ENCODE measurements at regions of chr3 and their contacts with region 1.

Region 1: DNA sequence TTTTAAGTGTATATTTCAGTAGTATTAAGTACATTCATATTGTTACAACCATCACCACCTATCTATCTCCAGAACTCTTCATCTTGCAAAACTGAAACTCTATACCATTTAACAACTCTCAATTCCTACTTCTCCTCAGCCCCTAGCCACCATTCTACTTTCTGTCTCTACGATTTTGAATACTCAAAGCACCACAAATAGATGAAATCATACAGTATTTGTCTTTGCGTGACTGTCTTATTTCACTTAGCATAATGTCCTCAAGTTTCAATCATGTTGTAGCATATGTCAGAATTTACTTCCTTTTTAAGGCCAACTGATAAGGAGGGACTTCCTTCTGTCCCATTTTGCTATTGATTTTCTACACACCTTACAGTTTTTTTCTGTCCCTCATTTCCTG is 593.3 kb downstream of the FHIT start:
- DNase-seq: no peak
- H3K4me3 ChIP-seq: no peak overlapping the region
- H3K27ac ChIP-seq: no peak overlapping the region
- H3K4me1 ChIP-seq: no peaks in the 10 kb centered on the region
- H3K27me3 ChIP-seq: no peaks in the 10 kb centered on the region
- CTCF ChIP-seq: no peak
- EP300 ChIP-seq: no peak
- POLR2A ChIP-seq: no peak

Region 2: DNA sequence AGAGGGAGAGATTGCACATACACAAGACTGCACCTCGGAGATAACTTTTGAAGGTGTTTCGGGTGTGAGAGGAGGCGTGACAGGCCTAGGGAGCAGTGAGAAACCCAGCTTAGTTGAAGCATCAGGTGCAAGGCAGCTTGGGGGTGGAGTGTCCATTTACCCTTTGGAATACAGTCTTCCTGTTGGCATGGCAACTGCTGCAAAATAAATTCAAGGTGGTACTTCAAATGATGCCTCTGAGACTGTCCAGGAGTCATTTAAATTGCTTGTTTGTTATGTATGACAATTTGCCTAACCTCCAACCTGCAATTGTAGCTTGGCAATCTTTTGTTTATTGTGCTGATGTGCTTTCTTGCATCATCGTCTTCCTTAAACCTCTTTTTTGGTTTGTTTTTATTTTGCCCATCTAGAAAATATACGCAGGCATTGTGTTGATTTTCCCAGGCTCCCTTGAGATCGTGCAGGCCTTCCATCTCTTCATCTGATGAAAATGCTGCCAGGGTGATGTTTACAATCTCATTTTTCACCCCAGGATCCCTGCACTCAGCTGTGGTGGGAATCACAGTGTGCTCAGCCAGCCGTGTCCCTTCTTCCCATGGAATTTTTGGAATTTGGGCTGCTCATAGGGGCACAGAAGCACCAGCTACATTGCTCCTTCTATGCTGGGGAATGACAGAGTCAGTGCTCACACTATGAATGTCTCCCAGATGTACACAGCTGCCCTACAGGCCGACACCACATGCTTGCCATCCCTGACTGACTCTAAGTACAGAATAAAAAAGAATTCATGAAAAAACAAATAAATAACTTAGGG is 1025.0 kb before region 1 on chr3:
- in situ Hi-C with region 1: no loop called
- intact Hi-C with region 1: loop called (anchors 10 kb)
- DNase-seq: no peak
- H3K4me3 ChIP-seq: no peak overlapping the region
- H3K27ac ChIP-seq: peak overlapping the region in 2 of 4 donors; percentile 17 to 21
- H3K4me1 ChIP-seq: peaks cover 0 to 5% (median 0%) of the 10 kb centered on the region in 4 donors
- H3K27me3 ChIP-seq: no peaks in the 10 kb centered on the region
- CTCF ChIP-seq: no peak
- EP300 ChIP-seq: no peak
- POLR2A ChIP-seq: no peak

Region 3: DNA sequence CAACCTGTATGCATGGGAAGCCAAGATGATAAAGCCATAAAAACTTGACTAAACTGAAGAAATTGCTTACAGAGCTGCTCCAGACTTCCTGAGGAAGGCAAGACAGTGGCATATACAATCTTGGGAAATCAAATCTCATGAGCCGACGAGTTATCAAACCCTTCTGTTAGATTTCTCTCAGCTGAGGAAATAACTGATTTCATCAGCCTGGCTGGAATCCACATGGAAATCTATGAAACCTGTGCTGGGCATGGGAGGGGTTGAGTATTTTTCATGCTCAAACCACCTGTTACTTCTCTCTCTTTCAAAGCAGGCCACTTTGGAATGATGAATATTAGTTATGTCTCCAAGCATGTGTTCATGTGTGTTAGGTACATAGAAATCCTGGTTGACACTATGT is 134.4 kb before region 1 on chr3:
- in situ Hi-C with region 1: no loop called
- intact Hi-C with region 1: no loop called
- DNase-seq: no peak
- H3K4me3 ChIP-seq: no peak overlapping the region
- H3K27ac ChIP-seq: no peak overlapping the region
- H3K4me1 ChIP-seq: no peaks in the 10 kb centered on the region
- H3K27me3 ChIP-seq: no peaks in the 10 kb centered on the region
- CTCF ChIP-seq: no peak
- EP300 ChIP-seq: no peak
- POLR2A ChIP-seq: no peak

Region 4: GRCh38 chr3:60912876-60913275 is 254.9 kb after region 1 on chr3:
- in situ Hi-C with region 1: no loop called
- intact Hi-C with region 1: no loop called
- DNase-seq: no peak
- H3K4me3 ChIP-seq: no peak overlapping the region
- H3K27ac ChIP-seq: no peak overlapping the region
- H3K4me1 ChIP-seq: no peaks in the 10 kb centered on the region
- H3K27me3 ChIP-seq: no peaks in the 10 kb centered on the region
- CTCF ChIP-seq: no peak
- EP300 ChIP-seq: no peak
- POLR2A ChIP-seq: no peak